Tibial artery (tissue), 4 donors: ENCODE measurements at regions of chr9 and their contacts with region 1.

Region 1: DNA sequence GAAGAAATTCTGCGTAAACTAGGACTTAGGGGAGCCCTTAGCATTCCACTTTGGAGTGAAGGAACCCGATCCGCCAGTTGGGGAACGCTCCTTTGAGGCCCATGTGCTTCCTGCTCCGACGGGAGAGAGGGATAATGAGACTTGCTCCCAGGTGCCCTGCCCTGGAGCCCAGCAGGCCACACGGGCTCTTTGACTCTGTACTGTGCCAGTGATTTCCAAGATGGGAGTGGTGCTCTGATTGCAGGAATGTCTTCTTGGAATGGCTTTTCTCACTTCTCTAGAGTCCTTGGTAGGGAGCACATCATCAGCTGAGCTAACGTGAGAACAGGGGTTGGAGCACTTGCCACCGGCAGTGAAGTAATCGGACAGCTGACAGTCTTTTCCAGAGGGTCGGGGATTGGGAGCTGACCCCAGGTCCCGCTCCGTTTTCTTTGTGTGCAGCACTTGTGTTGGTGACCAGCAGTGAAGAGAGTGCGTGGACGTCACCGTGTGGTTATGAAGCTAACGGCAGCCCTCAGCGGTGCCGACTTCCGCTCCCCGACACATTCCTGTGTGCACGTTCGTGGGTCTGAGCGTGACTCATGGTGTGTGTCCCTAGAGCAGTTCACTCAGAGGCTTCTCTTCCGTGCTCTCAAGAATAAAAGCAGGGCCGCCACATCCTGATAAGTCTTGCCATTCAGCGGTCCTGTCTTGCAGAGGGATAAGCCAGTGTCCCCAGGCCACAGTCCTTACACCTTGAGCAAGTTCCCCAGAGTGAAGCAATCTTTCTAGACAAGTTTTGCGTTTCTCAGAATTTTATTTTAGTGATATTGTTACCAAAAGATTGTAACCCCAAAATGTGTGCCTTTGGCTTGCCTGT is 25.6 kb downstream of the ABL1 start:
- DNase-seq: peak; percentile 91 to 96
- H3K4me3 ChIP-seq: no peak overlapping the region
- H3K27ac ChIP-seq: peak overlapping the region; percentile 80
- H3K4me1 ChIP-seq: peaks cover 0 to 68% (median 49%) of the 10 kb centered on the region in 4 donors
- H3K27me3 ChIP-seq: no peaks in the 10 kb centered on the region
- CTCF ChIP-seq: peak; percentile 61 to 69

Region 2: DNA sequence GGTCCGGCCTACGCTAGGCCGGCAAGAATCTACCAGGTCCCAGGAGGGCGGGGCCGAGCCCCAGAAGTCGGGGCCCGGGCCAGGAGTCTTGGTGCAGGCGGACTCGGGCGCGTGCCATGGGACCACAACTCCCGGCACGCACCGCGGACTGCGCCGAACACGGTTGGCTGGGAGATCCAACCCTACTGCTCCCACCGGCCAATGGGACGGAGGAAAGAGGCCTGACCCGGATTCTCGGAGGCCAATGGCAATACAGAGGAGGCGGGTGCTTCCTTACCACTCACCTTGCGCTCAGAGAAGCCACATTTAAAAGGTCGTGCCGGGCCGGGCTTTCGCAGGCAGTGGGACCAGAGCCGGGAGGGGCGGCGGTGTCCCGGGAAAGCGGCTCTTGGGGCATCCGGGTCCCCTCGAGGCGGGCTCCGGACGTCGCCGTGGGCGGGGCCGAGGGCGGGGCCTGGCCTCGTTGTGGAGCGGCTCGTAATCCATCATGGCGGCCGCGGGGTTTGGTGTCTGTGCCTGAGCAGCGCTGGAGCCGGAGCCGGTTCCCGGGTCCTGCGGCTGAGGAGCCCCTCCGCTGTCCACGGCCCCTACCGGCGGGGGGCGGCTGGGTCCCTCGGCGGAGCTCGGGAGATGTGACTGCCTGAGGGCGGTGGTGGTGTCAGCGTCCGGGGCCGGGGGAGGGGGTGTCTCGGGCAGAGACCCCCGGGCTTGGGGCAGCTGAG is 148.0 kb before region 1 on chr9:
- intact Hi-C with region 1: loop called (anchors 1 kb)
- DNase-seq: peak; percentile 99
- H3K4me3 ChIP-seq: peak overlapping the region; percentile 96 to 98
- H3K27ac ChIP-seq: peak overlapping the region; percentile 98
- H3K4me1 ChIP-seq: peaks cover 0 to 37% (median 22%) of the 10 kb centered on the region in 4 donors
- H3K27me3 ChIP-seq: no peaks in the 10 kb centered on the region
- CTCF ChIP-seq: peak in 1 of 2 experiments; percentile 16

Region 3: GRCh38 chr9:130780865-130781504 is 79.7 kb before region 1 on chr9:
- intact Hi-C with region 1: no loop called
- DNase-seq: peak; percentile 85 to 93
- H3K4me3 ChIP-seq: peak overlapping the region; percentile 46 to 58
- H3K27ac ChIP-seq: peak overlapping the region; percentile 86 to 96
- H3K4me1 ChIP-seq: peaks cover 5 to 63% (median 39%) of the 10 kb centered on the region in 4 donors
- H3K27me3 ChIP-seq: no peaks in the 10 kb centered on the region
- CTCF ChIP-seq: no peak